Activated naive CD4-positive, alpha-beta T cell treated with anti-CD3 and anti-CD28 coated beads for 36 hours (primary cell): ENCODE measurements at regions of chr17 and their contacts with region 1.

Region 1: DNA sequence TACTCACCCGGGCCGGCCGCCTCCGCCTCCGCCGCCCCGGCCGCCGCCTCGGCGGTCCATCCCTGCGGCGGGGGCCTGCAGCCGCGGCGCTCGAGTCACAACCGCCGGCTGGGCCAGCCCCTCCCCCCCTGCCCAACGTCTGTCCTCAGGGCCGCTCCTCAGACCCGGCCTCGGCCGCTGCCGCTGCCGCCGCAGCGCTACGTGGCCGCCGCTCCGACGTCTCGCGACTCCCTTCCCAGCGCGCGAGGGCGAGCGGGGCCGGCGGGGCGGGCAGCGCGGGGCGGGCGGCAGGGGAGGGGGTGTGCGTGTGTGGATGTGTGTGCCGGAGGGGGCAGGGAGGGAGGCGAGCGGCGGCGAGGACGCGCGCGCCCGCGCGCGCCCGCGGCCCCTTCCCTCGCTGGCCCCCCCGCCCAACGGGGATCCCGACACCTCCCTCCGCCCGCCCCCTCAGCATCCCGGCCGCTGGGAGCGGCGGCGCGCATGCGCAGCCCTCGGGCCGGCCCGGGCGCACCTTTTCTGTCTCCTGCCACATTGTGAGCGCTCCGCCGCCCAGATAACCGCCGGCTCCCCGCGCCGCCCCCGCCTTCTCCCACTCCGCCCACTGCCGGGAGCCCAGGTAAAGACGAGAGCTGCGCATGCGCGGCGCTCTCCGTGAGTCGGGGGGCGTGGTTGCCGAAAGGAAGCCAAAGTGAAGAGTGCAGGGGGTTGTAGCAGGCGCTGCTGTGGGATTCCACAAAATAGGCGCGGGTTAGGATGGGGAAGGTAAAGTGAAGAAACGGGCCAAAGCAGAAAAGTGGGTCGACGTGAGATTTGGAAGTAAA is at the start of gene ZNF652:
- DNase-seq: peak; percentile 91
- H3K4me3 Mint-ChIP-seq: peak within 1 kb of the TSS; percentile 90
- H3K27ac Mint-ChIP-seq: peak within 1 kb of the TSS; percentile 93
- H3K4me1 Mint-ChIP-seq: peaks cover 37% of the 10 kb centered on the region
- H3K27me3 Mint-ChIP-seq: no peaks in the 10 kb centered on the region
- total RNA-seq, gene ZNF652: 5.5 to 5.8 TPM

Region 2: GRCh38 chr17:49327835-49328784 is 34.0 kb before region 1 on chr17:
- CTCF ChIA-PET with region 1: interaction called, 4 read pairs
- intact Hi-C with region 1: loop called (anchors 2 kb)
- DNase-seq: peak; percentile 27
- H3K4me3 Mint-ChIP-seq: peak overlapping the region; percentile 0
- H3K27ac Mint-ChIP-seq: peak overlapping the region; percentile 42
- H3K4me1 Mint-ChIP-seq: peaks cover 45% of the 10 kb centered on the region
- H3K27me3 Mint-ChIP-seq: no peaks in the 10 kb centered on the region

Region 3: DNA sequence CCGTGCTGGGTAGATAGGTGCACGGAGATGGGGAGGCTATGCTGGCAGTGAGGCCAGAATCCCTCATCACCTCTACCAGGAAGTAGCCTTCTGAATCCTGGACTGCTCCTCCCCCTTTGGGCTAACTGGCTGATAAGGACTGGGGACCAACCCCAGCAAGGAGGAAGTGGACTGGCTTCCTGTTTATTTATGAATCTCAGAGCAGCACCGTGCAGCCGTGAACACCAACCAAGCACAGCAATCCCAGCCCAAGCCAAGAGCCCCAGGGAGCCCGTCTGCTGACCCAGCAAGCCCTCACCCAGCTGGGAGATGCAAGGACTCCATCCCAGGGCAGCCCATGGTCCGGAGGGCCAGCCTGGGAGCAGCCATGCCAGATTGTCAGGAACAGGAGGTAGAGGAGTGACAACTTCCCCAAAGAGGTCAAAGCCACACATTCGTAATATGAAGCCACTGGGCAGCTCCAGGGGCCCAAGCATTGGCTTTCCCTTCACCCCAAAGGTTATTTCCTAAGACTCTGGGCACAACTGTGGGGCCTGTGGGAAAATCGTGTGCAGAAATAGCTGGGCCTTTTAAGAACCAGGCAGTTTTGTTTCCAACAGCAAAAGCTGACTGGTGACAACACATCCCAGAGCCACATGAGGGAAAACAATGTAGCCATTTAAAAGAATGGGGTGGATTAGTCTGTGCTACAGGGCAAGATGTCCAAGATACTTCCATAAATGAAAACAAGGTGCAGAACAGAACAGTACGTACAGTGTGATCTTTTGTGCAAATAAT is 28.6 kb after region 1 on chr17:
- CTCF ChIA-PET with region 1: interaction called, 26 read pairs
- intact Hi-C with region 1: loop called (anchors 1 kb)
- DNase-seq: peak; percentile 22
- H3K4me3 Mint-ChIP-seq: no peak overlapping the region
- H3K27ac Mint-ChIP-seq: no peak overlapping the region
- H3K4me1 Mint-ChIP-seq: peaks cover 47% of the 10 kb centered on the region
- H3K27me3 Mint-ChIP-seq: no peaks in the 10 kb centered on the region

Region 4: DNA sequence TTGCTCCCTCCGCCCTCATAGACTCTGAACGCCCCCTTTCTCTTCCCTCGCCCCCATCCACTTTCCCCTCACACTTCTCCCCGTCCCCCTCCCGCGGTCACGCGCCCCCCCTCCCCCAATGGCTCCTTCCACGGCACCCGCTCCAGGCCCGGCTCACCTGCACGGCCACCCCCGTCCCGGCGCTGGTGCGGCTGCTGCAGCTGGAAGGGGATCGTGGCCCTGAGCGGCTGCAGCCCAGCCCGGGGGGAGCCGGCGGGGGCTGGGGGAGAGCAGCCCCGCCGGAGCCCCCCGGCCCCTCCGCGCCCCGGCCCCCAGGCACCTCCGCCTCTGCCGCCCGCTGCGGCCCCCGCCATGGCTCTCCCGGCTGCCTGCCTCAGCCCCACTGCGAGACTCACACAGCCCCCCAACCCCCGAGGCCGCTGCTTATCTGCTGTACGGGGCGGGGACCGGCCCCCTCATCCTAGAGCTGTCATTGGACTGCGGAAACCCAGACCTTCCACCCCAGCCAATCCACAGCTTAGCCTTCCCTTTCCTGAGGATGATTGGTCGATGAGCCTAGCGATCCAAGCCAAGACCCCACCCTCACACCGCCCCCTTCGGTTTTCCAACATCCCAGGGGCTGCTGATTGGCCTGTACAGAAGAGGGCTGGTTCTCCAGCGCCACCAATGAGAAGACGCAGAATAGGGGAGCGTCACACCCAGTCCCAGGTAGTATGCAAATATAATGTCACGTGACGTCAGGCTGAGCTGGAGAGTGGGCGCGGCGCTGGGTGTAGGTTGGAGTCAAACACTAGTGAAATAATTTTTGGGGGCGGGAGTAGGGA is 401.8 kb after region 1 on chr17 and contains the start of gene FAM117A:
- CTCF ChIA-PET with region 1: no interaction called
- intact Hi-C with region 1: loop called (anchors 1 kb)
- DNase-seq: peak; percentile 99
- H3K4me3 Mint-ChIP-seq: peak within 1 kb of the TSS; percentile 88
- H3K27ac Mint-ChIP-seq: peak within 1 kb of the TSS; percentile 83
- H3K4me1 Mint-ChIP-seq: peaks cover 47% of the 10 kb centered on the region
- H3K27me3 Mint-ChIP-seq: no peaks in the 10 kb centered on the region
- total RNA-seq, gene FAM117A: 17.7 TPM